ENCODE measurements at regions of chr7 and their contacts with region 1.

Region 1: DNA sequence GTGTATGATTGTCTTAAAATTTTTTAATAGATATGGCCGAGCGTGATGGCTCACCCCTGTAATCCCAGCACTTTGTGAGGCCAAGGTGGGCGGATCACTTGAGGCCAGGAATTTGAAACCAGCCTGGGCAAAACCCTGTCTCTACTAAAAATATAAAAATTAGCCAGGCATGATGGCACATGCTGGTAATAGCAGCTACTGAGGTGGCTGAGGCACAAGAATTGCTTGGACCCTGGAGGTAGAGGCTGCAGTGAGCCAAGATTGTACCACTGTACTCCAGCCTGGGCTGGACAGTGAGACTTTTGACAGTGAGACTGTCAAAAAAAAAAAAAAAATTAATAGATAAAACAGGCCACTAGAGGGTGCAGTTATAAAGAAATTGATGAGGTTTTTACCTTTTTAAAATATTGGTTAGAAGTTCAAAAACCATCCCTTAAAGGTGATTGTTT is 20.5 kb downstream of the NOM1 start:
- DNase-seq: peak in 4 of 9 donors; percentile 11 to 26 (median 16)
- ATAC-seq: peak; percentile 52
- H3K4me3 ChIP-seq: no peak overlapping the region
- H3K4me3 Mint-ChIP-seq: no peak overlapping the region
- H3K27ac ChIP-seq: no peak overlapping the region
- H3K27ac Mint-ChIP-seq: peak overlapping the region in 1 of 9 donors; percentile 59
- H3K4me1 ChIP-seq: no peaks in the 10 kb centered on the region
- H3K4me1 Mint-ChIP-seq: no peaks in the 10 kb centered on the region
- H3K27me3 ChIP-seq: no peaks in the 10 kb centered on the region
- H3K27me3 Mint-ChIP-seq: no peaks in the 10 kb centered on the region

Region 2: GRCh38 chr7:156684661-156685060 is 285.3 kb before region 1 on chr7:
- CTCF ChIA-PET with region 1: no interaction called
- POLR2A ChIA-PET with region 1: no interaction called
- intact Hi-C with region 1: no loop called
- DNase-seq: no peak
- ATAC-seq: no peak
- H3K4me3 ChIP-seq: no peak overlapping the region
- H3K4me3 Mint-ChIP-seq: no peak overlapping the region
- H3K27ac ChIP-seq: no peak overlapping the region
- H3K27ac Mint-ChIP-seq: peak overlapping the region in 1 of 9 donors; percentile 70
- H3K4me1 ChIP-seq: no peaks in the 10 kb centered on the region
- H3K4me1 Mint-ChIP-seq: peaks cover 0 to 5% (median 0%) of the 10 kb centered on the region in 7 donors
- H3K27me3 ChIP-seq: no peaks in the 10 kb centered on the region
- H3K27me3 Mint-ChIP-seq: no peaks in the 10 kb centered on the region

Region 3: DNA sequence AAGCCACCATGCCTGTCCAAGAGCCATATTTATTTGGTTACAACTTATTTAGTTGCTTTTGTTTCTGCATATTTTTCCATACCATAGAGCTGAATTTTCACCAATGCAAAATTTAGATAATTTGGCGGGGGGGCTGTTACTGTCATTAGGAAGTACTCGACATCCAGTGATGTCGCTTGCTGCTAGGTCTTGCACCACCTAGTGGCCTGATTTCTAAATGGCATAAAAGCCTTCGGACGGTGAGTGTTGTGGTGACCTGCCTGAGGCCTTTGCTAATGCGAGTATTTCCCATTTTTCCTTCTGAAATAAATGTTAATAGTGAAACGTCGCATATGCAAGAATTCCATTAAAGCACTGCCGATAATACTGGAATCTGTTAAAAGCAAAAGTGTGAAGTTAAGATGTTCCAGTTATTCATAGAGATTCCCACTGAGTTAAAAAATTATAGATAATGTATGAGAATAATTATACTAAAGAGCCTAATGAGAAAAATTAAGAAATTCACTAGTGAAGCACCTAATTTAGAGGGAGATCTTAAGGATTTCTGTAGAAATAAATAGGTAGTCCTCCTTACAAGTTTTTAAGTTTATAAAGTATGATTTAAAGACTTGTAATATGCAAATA is 280.7 kb after region 1 on chr7:
- CTCF ChIA-PET with region 1: interaction called, 7 read pairs
- POLR2A ChIA-PET with region 1: no interaction called
- intact Hi-C with region 1: loop called (anchors 1 to 10 kb)
- DNase-seq: peak in 7 of 9 donors; percentile 11 to 55 (median 37)
- ATAC-seq: peak; percentile 84
- H3K4me3 ChIP-seq: no peak overlapping the region
- H3K4me3 Mint-ChIP-seq: no peak overlapping the region
- H3K27ac ChIP-seq: no peak overlapping the region
- H3K27ac Mint-ChIP-seq: no peak overlapping the region
- H3K4me1 ChIP-seq: no peaks in the 10 kb centered on the region
- H3K4me1 Mint-ChIP-seq: peaks cover 0 to 5% (median 0%) of the 10 kb centered on the region in 7 donors
- H3K27me3 ChIP-seq: no peaks in the 10 kb centered on the region
- H3K27me3 Mint-ChIP-seq: no peaks in the 10 kb centered on the region

Measured in naive thymus-derived CD4-positive, alpha-beta T cell (primary cell).